ENCODE measurements at regions of chr18 and their contacts with region 1.

Region 1: DNA sequence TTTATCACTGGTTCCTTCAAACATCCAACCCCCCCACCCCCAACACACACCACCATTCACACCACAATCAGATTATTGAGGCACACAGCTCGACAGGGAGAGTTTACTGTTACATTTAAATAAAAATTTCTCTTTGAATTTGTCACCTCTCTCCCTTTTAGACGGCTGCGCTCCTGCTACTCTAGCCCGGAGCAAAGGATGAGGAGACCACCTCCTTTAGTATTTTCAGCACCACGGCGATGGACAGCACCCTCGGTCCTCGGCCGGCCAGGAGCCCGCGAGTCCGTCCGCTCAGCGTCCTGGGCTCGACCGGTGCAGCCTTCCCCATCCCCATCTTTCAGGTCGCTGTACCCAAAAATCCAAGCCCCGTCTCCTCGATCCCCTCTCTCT is 892 bp downstream of the CELF4 start:
- DNase-seq: peak in 1 of 2 experiments; percentile 92
- H3K4me3 ChIP-seq: peak overlapping the region; percentile 84 to 87 (median 86); a peak in 7 of 8 replicates
- H3K27ac ChIP-seq: no peak overlapping the region
- H3K4me1 ChIP-seq: peaks cover 0 to 7% (median 2%) of the 10 kb centered on the region in 4 experiments; a peak in 3 of 7 replicates
- H3K27me3 ChIP-seq: peaks cover 37 to 66% (median 59%) of the 10 kb centered on the region in 4 experiments
- CTCF ChIP-seq: no peak
- EP300 ChIP-seq: no peak
- POLR2A ChIP-seq: no peak
- RAD21 ChIP-seq: 0 out of 4 replicates have a peak, but pooled peaks of 1 of the 2 experiments have one; percentile 5

Region 2: GRCh38 chr18:37553633-37554395 is 10.9 kb before region 1 on chr18:
- CTCF ChIA-PET with region 1: interaction called, 20 read pairs
- POLR2A ChIA-PET with region 1: interaction called, 4 read pairs
- DNase-seq: peak in 1 of 2 experiments; percentile 69
- H3K4me3 ChIP-seq: peak overlapping the region in 3 of 4 experiments; percentile 18 to 47 (median 29); a peak in 6 of 8 replicates
- H3K27ac ChIP-seq: no peak overlapping the region
- H3K4me1 ChIP-seq: peaks cover 5 to 13% (median 7%) of the 10 kb centered on the region in 4 experiments; a peak in 6 of 7 replicates
- H3K27me3 ChIP-seq: peaks cover 0 to 15% (median 11%) of the 10 kb centered on the region in 4 experiments; a peak in 6 of 7 replicates
- CTCF ChIP-seq: peak; percentile 69 to 80 (median 80)
- EP300 ChIP-seq: no peak
- POLR2A ChIP-seq: no peak
- RAD21 ChIP-seq: peak; percentile 73 to 74